GM12878 (cell line): ENCODE measurements at regions of chr10 and their contacts with region 1.

Region 1: DNA sequence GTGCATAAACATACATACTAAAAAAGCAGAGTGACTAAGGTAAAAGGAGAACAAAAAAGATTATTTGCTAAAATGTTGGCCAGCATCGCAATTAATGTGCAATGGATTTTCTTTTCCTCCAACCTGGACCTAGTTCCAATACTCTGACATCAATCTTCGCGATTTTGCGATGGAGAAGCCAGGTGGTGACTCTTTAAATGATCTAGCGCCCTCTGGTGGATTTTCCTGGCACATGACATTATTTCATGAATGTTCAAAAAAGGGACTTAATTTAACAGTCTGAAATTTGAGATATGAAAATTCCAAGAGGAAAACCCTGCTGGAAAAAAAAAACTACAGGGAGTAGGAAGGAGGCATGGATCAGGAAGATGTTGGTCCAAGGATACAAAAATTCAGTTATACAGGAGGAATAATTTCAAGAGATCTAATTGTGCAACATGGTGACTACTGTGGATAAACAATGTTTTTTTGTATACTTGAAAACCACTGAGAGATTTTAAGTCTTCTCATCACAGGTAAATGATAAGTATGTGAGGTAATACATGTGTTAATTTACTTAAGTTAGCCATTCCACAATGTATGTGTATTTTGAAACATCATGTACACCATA is 4.3 kb upstream of the KCNMA1 start:
- DNase-seq: no peak
- ATAC-seq: peak; percentile 27
- H3K4me3 ChIP-seq: no peak overlapping the region
- H3K27ac ChIP-seq: no peak overlapping the region
- H3K4me1 ChIP-seq: 0 out of 2 replicates have a peak, but pooled peaks cover 2% of the 10 kb centered on the region
- H3K27me3 ChIP-seq: no peaks in the 10 kb centered on the region; a peak in 1 of 4 replicates
- CTCF ChIP-seq: peak; percentile 58 to 81 (median 72); a peak in 5 of 6 replicates
- EP300 ChIP-seq: no peak
- POLR2A ChIP-seq: no peak
- RAD21 ChIP-seq: peak; percentile 92

Region 2: GRCh38 chr10:77165445-77166208 is 476.3 kb before region 1 on chr10:
- CTCF ChIA-PET with region 1: interaction called, 532 read pairs
- POLR2A ChIA-PET with region 1: interaction called, 3 read pairs
- RAD21 ChIA-PET with region 1: interaction called, 52 read pairs
- SMC1A ChIA-PET with region 1: interaction called, 113 read pairs
- in situ Hi-C with region 1: loop called (anchors 5 kb)
- intact Hi-C with region 1: no loop called
- DNase-seq: peak; percentile 24
- ATAC-seq: peak; percentile 95; the same call in 2 of the 3 replicates
- H3K4me3 ChIP-seq: no peak overlapping the region
- H3K27ac ChIP-seq: no peak overlapping the region
- H3K4me1 ChIP-seq: no peaks in the 10 kb centered on the region
- H3K27me3 ChIP-seq: no peaks in the 10 kb centered on the region
- CTCF ChIP-seq: peak; percentile 80 to 87 (median 81); a peak in 5 of 6 replicates
- EP300 ChIP-seq: no peak
- POLR2A ChIP-seq: no peak
- RAD21 ChIP-seq: peak; percentile 82

Region 3: DNA sequence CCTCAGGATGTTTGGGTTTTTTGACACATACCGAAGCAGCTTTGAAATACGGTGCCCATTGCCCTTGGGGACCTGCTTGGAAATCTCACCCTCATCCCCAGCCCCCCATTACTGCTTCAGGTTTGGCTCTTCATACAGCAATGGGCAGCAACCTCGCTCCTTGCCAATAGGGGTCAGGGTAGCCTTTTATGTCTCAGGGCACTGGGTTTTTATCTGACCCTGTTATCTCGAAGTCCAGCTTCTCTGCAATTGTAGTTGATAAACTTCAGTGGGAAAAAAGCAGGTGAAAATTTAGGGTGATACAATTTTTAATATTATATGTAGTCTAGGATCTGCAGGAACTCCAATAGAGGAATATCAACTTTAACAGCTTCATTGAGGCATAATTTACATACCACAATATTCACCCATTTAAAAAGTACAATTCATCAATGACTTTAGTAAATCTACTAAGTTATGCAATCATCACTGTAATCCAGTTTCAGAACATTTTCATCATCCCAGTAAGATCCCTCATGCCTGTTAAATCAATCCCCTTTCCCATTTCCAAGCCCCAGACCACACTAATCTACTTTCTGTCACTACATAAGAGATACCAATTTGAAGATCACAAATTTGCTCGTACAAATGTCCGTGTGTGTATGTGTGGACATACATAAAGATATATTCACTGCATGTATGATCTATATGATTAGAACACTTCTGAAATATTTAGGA is 390.4 kb before region 1 on chr10:
- CTCF ChIA-PET with region 1: interaction called, 126 read pairs
- POLR2A ChIA-PET with region 1: interaction called, 4 read pairs
- RAD21 ChIA-PET with region 1: interaction called, 22 read pairs
- SMC1A ChIA-PET with region 1: interaction called, 47 read pairs
- in situ Hi-C with region 1: loop called (anchors 5 kb)
- intact Hi-C with region 1: loop called (anchors 1 kb)
- DNase-seq: no peak
- ATAC-seq: peak; percentile 94
- H3K4me3 ChIP-seq: no peak overlapping the region
- H3K27ac ChIP-seq: no peak overlapping the region
- H3K4me1 ChIP-seq: no peaks in the 10 kb centered on the region
- H3K27me3 ChIP-seq: no peaks in the 10 kb centered on the region
- CTCF ChIP-seq: peak; percentile 59 to 76 (median 64)
- EP300 ChIP-seq: no peak
- POLR2A ChIP-seq: no peak
- RAD21 ChIP-seq: peak; percentile 66

Region 4: DNA sequence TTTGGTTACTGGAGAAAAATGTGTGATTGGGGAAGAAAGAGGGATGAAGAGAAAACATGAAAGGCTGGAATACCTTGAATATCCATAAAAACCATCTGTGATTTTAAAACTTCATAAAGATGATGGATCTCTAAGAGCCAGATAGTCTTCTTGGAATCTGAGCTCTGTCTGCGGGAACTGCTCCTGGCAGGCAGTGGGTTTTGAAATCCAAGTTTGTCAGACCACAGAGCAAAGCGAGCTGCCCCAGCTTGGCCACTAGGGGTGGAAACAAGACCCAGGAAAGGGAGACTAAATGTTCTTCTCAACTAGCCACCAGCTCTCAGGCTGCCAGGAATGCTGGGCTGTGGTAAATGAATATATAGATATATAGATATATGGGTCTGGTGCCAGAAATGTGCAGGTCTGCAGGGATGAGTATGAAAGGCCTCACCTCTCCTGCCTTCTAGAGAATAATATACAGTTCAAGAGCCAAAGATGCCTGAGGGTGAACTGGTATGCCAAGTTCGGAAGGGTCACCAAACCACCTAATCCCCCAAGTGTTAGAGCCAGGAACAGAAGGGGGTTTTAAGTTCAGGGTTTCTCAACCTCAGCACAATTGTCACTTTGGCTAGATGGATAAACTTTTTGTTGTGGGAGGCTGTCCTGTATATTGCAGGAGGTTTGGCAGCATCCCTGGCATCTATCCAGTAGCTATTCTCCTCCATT is 213.1 kb before region 1 on chr10:
- CTCF ChIA-PET with region 1: interaction called, 42 read pairs
- POLR2A ChIA-PET with region 1: no interaction called
- RAD21 ChIA-PET with region 1: interaction called, 14 read pairs
- SMC1A ChIA-PET with region 1: interaction called, 18 read pairs
- in situ Hi-C with region 1: no loop called
- intact Hi-C with region 1: no loop called
- DNase-seq: no peak
- ATAC-seq: peak; percentile 66
- H3K4me3 ChIP-seq: no peak overlapping the region
- H3K27ac ChIP-seq: no peak overlapping the region
- H3K4me1 ChIP-seq: no peaks in the 10 kb centered on the region
- H3K27me3 ChIP-seq: no peaks in the 10 kb centered on the region
- CTCF ChIP-seq: peak in 2 of 3 experiments; percentile 28 to 55; a peak in 4 of 6 replicates
- EP300 ChIP-seq: no peak
- POLR2A ChIP-seq: no peak
- RAD21 ChIP-seq: peak; percentile 26; the same call in 1 of the 2 replicates

Region 5: GRCh38 chr10:77524281-77524711 is 117.6 kb before region 1 on chr10:
- CTCF ChIA-PET with region 1: interaction called, 12 read pairs
- POLR2A ChIA-PET with region 1: no interaction called
- RAD21 ChIA-PET with region 1: interaction called, 36 read pairs
- SMC1A ChIA-PET with region 1: interaction called, 27 read pairs
- in situ Hi-C with region 1: no loop called
- intact Hi-C with region 1: no loop called
- DNase-seq: no peak
- ATAC-seq: no peak
- H3K4me3 ChIP-seq: no peak overlapping the region
- H3K27ac ChIP-seq: no peak overlapping the region
- H3K4me1 ChIP-seq: no peaks in the 10 kb centered on the region
- H3K27me3 ChIP-seq: no peaks in the 10 kb centered on the region; a peak in 1 of 4 replicates
- CTCF ChIP-seq: no peak
- EP300 ChIP-seq: no peak
- POLR2A ChIP-seq: no peak
- RAD21 ChIP-seq: no peak

Region 6: GRCh38 chr10:77685432-77685831 is 43.5 kb after region 1 on chr10:
- CTCF ChIA-PET with region 1: interaction called, 25 read pairs
- POLR2A ChIA-PET with region 1: interaction called, 5 read pairs
- RAD21 ChIA-PET with region 1: interaction called, 6 read pairs
- SMC1A ChIA-PET with region 1: interaction called, 12 read pairs
- in situ Hi-C with region 1: no loop called
- intact Hi-C with region 1: no loop called
- DNase-seq: no peak
- ATAC-seq: peak; percentile 81
- H3K4me3 ChIP-seq: no peak overlapping the region
- H3K27ac ChIP-seq: no peak overlapping the region
- H3K4me1 ChIP-seq: peaks cover 47% of the 10 kb centered on the region
- H3K27me3 ChIP-seq: no peaks in the 10 kb centered on the region
- CTCF ChIP-seq: peak in 1 of 3 experiments; percentile 15; a peak in 1 of 6 replicates
- EP300 ChIP-seq: no peak
- POLR2A ChIP-seq: no peak
- RAD21 ChIP-seq: no peak

Region 7: DNA sequence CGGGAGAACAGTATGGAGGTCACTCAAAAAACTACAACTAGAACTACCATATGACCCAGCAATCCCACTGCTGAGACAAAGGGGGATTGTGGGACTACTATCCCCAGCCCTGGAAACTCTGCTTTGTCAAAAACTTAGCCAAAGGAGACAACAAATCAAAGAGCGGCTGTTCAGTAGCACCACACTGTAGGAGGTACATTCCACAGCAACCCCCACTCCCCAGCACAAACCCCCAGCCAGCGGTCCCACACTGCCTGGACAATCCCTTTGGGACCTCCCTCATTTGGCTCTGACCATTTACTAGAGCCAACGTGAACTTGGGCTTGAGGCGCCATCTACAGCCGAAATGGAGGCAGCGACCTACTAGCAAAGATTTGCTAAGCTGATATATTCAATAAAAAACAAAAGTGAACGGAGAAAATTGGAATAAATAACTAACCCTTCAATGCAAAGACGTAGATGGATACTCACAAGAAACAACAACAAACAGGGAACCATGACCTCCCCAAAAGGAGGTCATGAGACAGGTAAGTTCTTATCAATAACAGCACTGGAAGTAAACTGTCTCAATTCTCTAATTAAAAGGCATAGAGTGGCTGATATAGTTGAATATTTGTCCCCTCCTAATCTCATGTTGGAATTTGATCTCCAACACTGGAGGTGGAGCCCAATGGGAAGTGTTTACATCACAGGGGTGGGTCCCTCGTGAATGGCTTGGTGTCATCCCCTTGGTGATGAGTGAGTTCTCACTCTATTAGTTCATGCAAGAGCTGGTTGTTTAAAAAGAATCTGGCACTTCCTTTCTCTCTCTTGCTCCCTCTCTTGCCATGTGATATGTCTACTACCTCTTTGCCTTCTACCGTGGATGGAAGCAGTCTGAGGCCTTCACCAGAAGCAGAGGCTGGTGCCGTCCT is 114.7 kb after region 1 on chr10:
- CTCF ChIA-PET with region 1: interaction called, 5 read pairs
- POLR2A ChIA-PET with region 1: no interaction called
- RAD21 ChIA-PET with region 1: no interaction called
- SMC1A ChIA-PET with region 1: no interaction called
- in situ Hi-C with region 1: no loop called
- intact Hi-C with region 1: loop called (anchors 2 kb)
- DNase-seq: no peak
- ATAC-seq: peak; percentile 96
- H3K4me3 ChIP-seq: no peak overlapping the region
- H3K27ac ChIP-seq: no peak overlapping the region
- H3K4me1 ChIP-seq: no peaks in the 10 kb centered on the region
- H3K27me3 ChIP-seq: no peaks in the 10 kb centered on the region; a peak in 1 of 4 replicates
- CTCF ChIP-seq: peak; percentile 79 to 82 (median 80)
- EP300 ChIP-seq: no peak
- POLR2A ChIP-seq: no peak
- RAD21 ChIP-seq: peak; percentile 75

Region 8: DNA sequence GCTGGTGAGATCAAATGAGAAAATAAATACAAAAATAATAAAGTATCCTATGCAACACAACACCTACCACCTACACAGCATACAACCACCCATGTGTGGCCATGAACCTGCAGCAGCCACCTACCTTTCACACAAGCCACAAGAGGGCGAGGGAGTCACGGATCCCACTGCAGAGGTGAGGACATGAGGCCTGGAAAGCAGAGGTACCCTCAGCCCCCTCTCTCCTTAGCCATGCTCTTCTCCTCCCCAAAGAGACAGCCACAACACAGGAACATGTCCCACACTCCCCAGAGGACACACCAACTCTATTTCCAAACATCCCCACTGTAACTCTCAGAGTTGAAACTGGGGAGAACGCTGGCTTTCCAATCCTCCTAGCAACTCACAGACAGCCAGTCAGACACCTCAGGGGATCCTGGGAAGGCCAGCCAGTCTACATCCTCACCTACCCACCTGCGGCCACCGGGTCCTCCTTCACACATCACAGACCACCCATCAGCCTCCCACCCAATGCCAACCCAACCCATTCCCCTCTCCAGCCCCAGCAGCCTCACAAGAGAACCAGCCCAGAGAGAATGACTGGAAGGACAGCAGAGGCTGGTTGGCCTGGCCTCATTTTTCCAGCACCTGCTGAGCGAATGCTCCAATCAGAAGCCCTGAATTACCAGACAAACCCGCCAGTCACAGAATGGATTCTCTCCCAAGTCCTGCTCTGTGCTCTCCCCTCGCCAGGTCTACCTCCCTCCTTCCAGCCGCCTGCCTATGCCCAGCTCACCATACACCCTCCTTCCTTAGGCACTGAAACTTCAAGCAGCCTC is 266.2 kb after region 1 on chr10:
- CTCF ChIA-PET with region 1: no interaction called
- POLR2A ChIA-PET with region 1: no interaction called
- RAD21 ChIA-PET with region 1: no interaction called
- SMC1A ChIA-PET with region 1: no interaction called
- in situ Hi-C with region 1: no loop called
- intact Hi-C with region 1: no loop called
- DNase-seq: no peak
- ATAC-seq: peak; percentile 84
- H3K4me3 ChIP-seq: no peak overlapping the region
- H3K27ac ChIP-seq: no peak overlapping the region
- H3K4me1 ChIP-seq: no peaks in the 10 kb centered on the region
- H3K27me3 ChIP-seq: no peaks in the 10 kb centered on the region
- CTCF ChIP-seq: peak; percentile 39 to 46 (median 45); a peak in 5 of 6 replicates
- EP300 ChIP-seq: no peak
- POLR2A ChIP-seq: no peak
- RAD21 ChIP-seq: peak; percentile 40